CD8-positive, alpha-beta T cell (primary cell): ENCODE measurements at regions of chr11 and their contacts with region 1.

Region 1: DNA sequence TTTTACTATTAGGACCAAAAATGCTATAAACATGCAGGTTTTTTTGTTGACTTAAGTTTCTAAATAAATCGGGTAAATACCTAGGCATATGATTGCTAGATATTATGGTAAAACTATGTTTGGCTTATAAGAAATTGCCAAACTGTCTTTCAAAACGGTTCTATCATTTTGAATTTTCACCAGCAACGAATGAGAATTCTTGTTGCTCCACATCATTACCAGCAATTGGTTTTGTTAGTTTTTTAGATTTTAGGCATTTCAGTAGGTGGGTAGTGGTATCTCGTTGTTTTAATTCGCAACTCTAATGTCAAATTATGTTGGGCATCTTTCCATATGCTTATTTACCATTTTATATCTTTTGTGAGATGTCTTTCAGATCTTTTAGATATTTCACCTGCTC is 510.2 kb downstream of the JRKL start:
- DNase-seq: no peak
- ATAC-seq: no peak
- H3K4me3 ChIP-seq: no peak overlapping the region
- H3K4me3 Mint-ChIP-seq: no peak overlapping the region
- H3K27ac ChIP-seq: no peak overlapping the region
- H3K27ac Mint-ChIP-seq: no peak overlapping the region
- H3K4me1 ChIP-seq: no peaks in the 10 kb centered on the region
- H3K4me1 Mint-ChIP-seq: no peaks in the 10 kb centered on the region
- H3K27me3 ChIP-seq: no peaks in the 10 kb centered on the region
- H3K27me3 Mint-ChIP-seq: no peaks in the 10 kb centered on the region
- CTCF ChIP-seq: no peak

Region 2: GRCh38 chr11:96827164-96827563 is 72.8 kb before region 1 on chr11:
- CTCF ChIA-PET with region 1: no interaction called
- POLR2A ChIA-PET with region 1: no interaction called
- intact Hi-C with region 1: loop called in 1 of 2 experiments (anchors 2 kb)
- DNase-seq: no peak
- ATAC-seq: no peak
- H3K4me3 ChIP-seq: no peak overlapping the region
- H3K4me3 Mint-ChIP-seq: no peak overlapping the region
- H3K27ac ChIP-seq: no peak overlapping the region
- H3K27ac Mint-ChIP-seq: no peak overlapping the region
- H3K4me1 ChIP-seq: no peaks in the 10 kb centered on the region
- H3K4me1 Mint-ChIP-seq: no peaks in the 10 kb centered on the region
- H3K27me3 ChIP-seq: no peaks in the 10 kb centered on the region
- H3K27me3 Mint-ChIP-seq: no peaks in the 10 kb centered on the region
- CTCF ChIP-seq: no peak

Region 3: DNA sequence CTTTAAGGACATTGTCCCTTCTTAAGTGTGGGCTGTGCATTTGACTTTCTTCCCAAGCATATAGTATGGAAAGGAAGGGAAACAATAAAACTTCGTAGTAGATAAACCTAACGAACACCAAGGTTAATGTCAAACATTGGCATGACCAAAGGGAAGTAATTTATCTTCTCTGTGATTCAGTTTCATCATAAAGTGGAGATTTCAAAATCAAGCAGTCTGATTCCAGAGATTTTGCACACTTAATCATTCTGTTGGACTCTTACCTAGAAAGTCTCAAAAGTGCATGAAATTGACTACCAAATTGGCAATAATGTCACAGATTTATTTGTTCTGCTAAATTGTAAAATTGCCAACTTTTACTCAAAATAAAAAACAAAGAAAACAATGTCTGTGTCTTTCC is 49.5 kb after region 1 on chr11:
- CTCF ChIA-PET with region 1: no interaction called
- POLR2A ChIA-PET with region 1: no interaction called
- intact Hi-C with region 1: no loop called
- DNase-seq: no peak
- ATAC-seq: no peak
- H3K4me3 ChIP-seq: no peak overlapping the region
- H3K4me3 Mint-ChIP-seq: no peak overlapping the region
- H3K27ac ChIP-seq: no peak overlapping the region
- H3K27ac Mint-ChIP-seq: no peak overlapping the region
- H3K4me1 ChIP-seq: no peaks in the 10 kb centered on the region
- H3K4me1 Mint-ChIP-seq: no peaks in the 10 kb centered on the region
- H3K27me3 ChIP-seq: no peaks in the 10 kb centered on the region
- H3K27me3 Mint-ChIP-seq: no peaks in the 10 kb centered on the region
- CTCF ChIP-seq: no peak